GM12878 (cell line): ENCODE measurements at regions of chr16 and their contacts with region 1.

Region 1: GRCh38 chr16:69565671-69566239 is at the start of gene NFAT5:
- DNase-seq: no peak
- ATAC-seq: peak; percentile 40
- H3K4me3 ChIP-seq: peak within 1 kb of the TSS; percentile 97
- H3K27ac ChIP-seq: peak within 1 kb of the TSS; percentile 96
- H3K4me1 ChIP-seq: no peaks in the 10 kb centered on the region; the same call in 1 of the 2 replicates
- H3K27me3 ChIP-seq: no peaks in the 10 kb centered on the region
- CTCF ChIP-seq: no peak
- EP300 ChIP-seq: peak in 1 of 2 experiments; percentile 100; a peak in 2 of 4 replicates
- POLR2A ChIP-seq: peak; percentile 87
- RAD21 ChIP-seq: no peak
- polyA plus RNA-seq, gene NFAT5: 0.58 to 1.9 TPM

Region 2: DNA sequence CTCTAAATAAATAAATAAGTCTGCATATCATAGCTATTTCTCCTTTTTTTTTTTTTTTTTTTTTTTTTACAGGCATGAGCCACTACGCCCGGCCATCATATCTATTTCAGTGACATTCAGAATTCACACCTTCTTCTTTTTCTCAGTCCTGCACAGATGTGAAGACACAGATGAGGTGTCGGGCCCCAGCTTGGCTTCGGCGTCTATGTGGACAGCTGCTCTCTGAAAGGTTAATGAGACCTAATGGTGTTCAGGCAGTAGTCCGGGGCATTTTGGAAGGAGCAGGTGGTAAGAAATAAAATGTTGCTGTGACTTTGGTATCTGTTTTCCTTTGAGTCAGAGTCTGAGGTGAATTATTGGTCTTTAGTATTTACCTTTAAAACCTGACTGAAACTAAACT is 698.8 kb before region 1 on chr16:
- CTCF ChIA-PET with region 1: no interaction called
- POLR2A ChIA-PET with region 1: no interaction called
- RAD21 ChIA-PET with region 1: no interaction called
- SMC1A ChIA-PET with region 1: no interaction called
- in situ Hi-C with region 1: no loop called
- intact Hi-C with region 1: no loop called
- DNase-seq: no peak
- ATAC-seq: no peak
- H3K4me3 ChIP-seq: no peak overlapping the region
- H3K27ac ChIP-seq: no peak overlapping the region
- H3K4me1 ChIP-seq: peaks cover 12% of the 10 kb centered on the region; the same call in 1 of the 2 replicates
- H3K27me3 ChIP-seq: no peaks in the 10 kb centered on the region
- CTCF ChIP-seq: no peak
- EP300 ChIP-seq: no peak
- POLR2A ChIP-seq: no peak
- RAD21 ChIP-seq: no peak

Region 3: GRCh38 chr16:69157196-69157595 is 408.6 kb before region 1 on chr16:
- CTCF ChIA-PET with region 1: no interaction called
- POLR2A ChIA-PET with region 1: no interaction called
- RAD21 ChIA-PET with region 1: no interaction called
- SMC1A ChIA-PET with region 1: no interaction called
- in situ Hi-C with region 1: no loop called
- intact Hi-C with region 1: no loop called
- DNase-seq: no peak
- ATAC-seq: no peak
- H3K4me3 ChIP-seq: no peak overlapping the region
- H3K27ac ChIP-seq: no peak overlapping the region
- H3K4me1 ChIP-seq: no peaks in the 10 kb centered on the region
- H3K27me3 ChIP-seq: no peaks in the 10 kb centered on the region
- CTCF ChIP-seq: no peak
- EP300 ChIP-seq: no peak
- POLR2A ChIP-seq: no peak
- RAD21 ChIP-seq: no peak

Region 4: GRCh38 chr16:69410285-69410990 is 155.3 kb before region 1 on chr16:
- CTCF ChIA-PET with region 1: no interaction called
- POLR2A ChIA-PET with region 1: no interaction called
- RAD21 ChIA-PET with region 1: no interaction called
- SMC1A ChIA-PET with region 1: no interaction called
- in situ Hi-C with region 1: no loop called
- intact Hi-C with region 1: no loop called
- DNase-seq: no peak
- ATAC-seq: no peak
- H3K4me3 ChIP-seq: no peak overlapping the region
- H3K27ac ChIP-seq: no peak overlapping the region
- H3K4me1 ChIP-seq: no peaks in the 10 kb centered on the region
- H3K27me3 ChIP-seq: no peaks in the 10 kb centered on the region
- CTCF ChIP-seq: no peak
- EP300 ChIP-seq: no peak
- POLR2A ChIP-seq: no peak
- RAD21 ChIP-seq: no peak

Region 5: GRCh38 chr16:69424053-69424934 is 141.5 kb before region 1 on chr16 and contains the start of gene CYB5B:
- CTCF ChIA-PET with region 1: no interaction called
- POLR2A ChIA-PET with region 1: interaction called, 4 read pairs
- RAD21 ChIA-PET with region 1: interaction called, 4 read pairs
- SMC1A ChIA-PET with region 1: interaction called, 9 read pairs
- in situ Hi-C with region 1: no loop called
- intact Hi-C with region 1: loop called (anchors 2 kb)
- DNase-seq: peak; percentile 98
- ATAC-seq: peak; percentile 98
- H3K4me3 ChIP-seq: peak within 1 kb of the TSS; percentile 77
- H3K27ac ChIP-seq: peak within 1 kb of the TSS; percentile 78
- H3K4me1 ChIP-seq: no peaks in the 10 kb centered on the region
- H3K27me3 ChIP-seq: no peaks in the 10 kb centered on the region
- CTCF ChIP-seq: no peak
- EP300 ChIP-seq: no peak
- POLR2A ChIP-seq: peak; percentile 97
- RAD21 ChIP-seq: no peak
- polyA plus RNA-seq, gene CYB5B: 170 to 182 TPM

Region 6: DNA sequence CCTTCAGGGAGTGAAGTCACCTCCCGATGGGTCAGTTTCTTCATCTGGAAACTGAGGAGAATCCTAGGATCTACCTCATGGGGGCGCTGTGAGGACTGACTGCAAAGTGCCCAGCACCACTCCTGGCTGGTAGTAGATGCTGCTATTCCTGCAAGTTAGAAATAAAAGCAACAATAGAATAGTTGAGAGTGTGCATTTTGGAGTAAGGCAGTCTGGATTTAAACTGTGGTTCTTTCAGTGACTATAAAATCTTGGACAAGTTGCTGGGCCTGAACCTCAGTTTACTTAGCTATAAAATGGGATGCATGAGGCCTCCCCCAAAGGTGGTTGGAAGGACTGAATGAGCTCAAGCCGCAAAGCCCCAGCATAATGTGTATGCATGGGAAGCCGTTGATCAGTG is 70.8 kb before region 1 on chr16:
- CTCF ChIA-PET with region 1: interaction called, 17 read pairs
- POLR2A ChIA-PET with region 1: no interaction called
- RAD21 ChIA-PET with region 1: no interaction called
- SMC1A ChIA-PET with region 1: interaction called, 5 read pairs
- in situ Hi-C with region 1: no loop called
- intact Hi-C with region 1: no loop called
- DNase-seq: no peak
- ATAC-seq: peak; percentile 67
- H3K4me3 ChIP-seq: no peak overlapping the region
- H3K27ac ChIP-seq: no peak overlapping the region
- H3K4me1 ChIP-seq: no peaks in the 10 kb centered on the region
- H3K27me3 ChIP-seq: no peaks in the 10 kb centered on the region
- CTCF ChIP-seq: peak; percentile 27 to 52 (median 41)
- EP300 ChIP-seq: no peak
- POLR2A ChIP-seq: no peak
- RAD21 ChIP-seq: peak; percentile 36; the same call in 1 of the 2 replicates

Region 7: DNA sequence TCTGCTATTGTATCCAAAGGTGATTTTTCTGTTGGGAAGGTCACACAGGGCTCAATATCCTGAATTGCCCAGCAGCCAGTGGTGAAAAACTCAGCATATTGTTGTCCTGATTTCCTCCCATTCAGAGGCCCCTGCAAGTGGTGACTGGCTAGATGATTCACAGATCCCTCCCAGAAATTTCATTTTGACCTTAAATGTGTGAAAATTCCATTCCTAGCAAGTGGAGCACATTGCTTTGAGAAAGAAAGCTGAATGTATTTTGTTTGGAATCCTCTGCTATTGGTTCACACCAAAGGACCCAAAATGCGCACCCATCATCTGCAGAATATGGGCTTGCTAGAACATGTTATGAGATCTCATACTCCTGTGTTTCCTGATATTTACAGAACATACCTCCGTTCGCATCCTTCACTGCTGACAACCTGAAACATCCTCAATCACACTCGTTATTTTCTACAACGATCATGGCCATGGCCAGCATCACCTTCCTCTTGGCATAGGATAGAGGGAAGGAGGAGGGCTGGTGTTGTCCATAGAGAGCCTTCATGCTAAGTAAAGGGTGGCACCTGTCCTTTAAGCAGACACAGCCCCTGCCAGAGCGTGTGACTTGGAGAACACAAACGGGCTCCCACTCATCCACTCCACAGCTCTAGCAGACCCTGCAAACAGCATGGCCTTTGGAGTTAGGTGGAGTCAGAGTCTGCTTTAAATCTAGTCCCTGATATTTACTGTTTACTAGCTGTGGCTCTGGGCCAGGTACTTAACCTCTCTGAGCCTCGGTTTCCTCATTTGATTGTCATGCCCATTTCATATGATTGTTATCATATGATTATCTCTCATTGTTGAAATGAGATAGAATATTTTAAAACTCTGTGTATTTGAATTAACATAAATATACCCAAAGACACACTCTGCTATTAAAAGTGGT is 30.4 kb before region 1 on chr16:
- CTCF ChIA-PET with region 1: interaction called, 5 read pairs
- POLR2A ChIA-PET with region 1: interaction called, 9 read pairs
- RAD21 ChIA-PET with region 1: interaction called, 3 read pairs
- SMC1A ChIA-PET with region 1: interaction called, 4 read pairs
- in situ Hi-C with region 1: no loop called
- intact Hi-C with region 1: loop called (anchors 2 kb)
- DNase-seq: no peak
- ATAC-seq: no peak
- H3K4me3 ChIP-seq: no peak overlapping the region
- H3K27ac ChIP-seq: no peak overlapping the region
- H3K4me1 ChIP-seq: peaks cover 5% of the 10 kb centered on the region
- H3K27me3 ChIP-seq: no peaks in the 10 kb centered on the region
- CTCF ChIP-seq: no peak
- EP300 ChIP-seq: no peak
- POLR2A ChIP-seq: no peak
- RAD21 ChIP-seq: no peak

Region 8: GRCh38 chr16:69691980-69692911 is 126.5 kb after region 1 on chr16:
- CTCF ChIA-PET with region 1: no interaction called
- POLR2A ChIA-PET with region 1: no interaction called
- RAD21 ChIA-PET with region 1: no interaction called
- SMC1A ChIA-PET with region 1: no interaction called
- in situ Hi-C with region 1: no loop called
- intact Hi-C with region 1: no loop called
- DNase-seq: peak; percentile 7
- ATAC-seq: no peak; the same call in 1 of the 3 replicates
- H3K4me3 ChIP-seq: no peak overlapping the region
- H3K27ac ChIP-seq: no peak overlapping the region
- H3K4me1 ChIP-seq: peaks cover 5% of the 10 kb centered on the region; the same call in 1 of the 2 replicates
- H3K27me3 ChIP-seq: no peaks in the 10 kb centered on the region
- CTCF ChIP-seq: no peak
- EP300 ChIP-seq: no peak
- POLR2A ChIP-seq: no peak
- RAD21 ChIP-seq: no peak

Region 9: GRCh38 chr16:69754469-69755310 is 188.9 kb after region 1 on chr16 and contains the start of gene NOB1:
- CTCF ChIA-PET with region 1: interaction called, 6 read pairs
- POLR2A ChIA-PET with region 1: interaction called, 10 read pairs
- RAD21 ChIA-PET with region 1: interaction called, 15 read pairs
- SMC1A ChIA-PET with region 1: interaction called, 3 read pairs
- in situ Hi-C with region 1: no loop called
- intact Hi-C with region 1: no loop called
- DNase-seq: peak; percentile 92
- ATAC-seq: peak; percentile 97
- H3K4me3 ChIP-seq: peak within 1 kb of the TSS; percentile 93
- H3K27ac ChIP-seq: peak within 1 kb of the TSS; percentile 97
- H3K4me1 ChIP-seq: peaks cover 5% of the 10 kb centered on the region
- H3K27me3 ChIP-seq: no peaks in the 10 kb centered on the region
- CTCF ChIP-seq: peak; percentile 99 to 100 (median 99); a peak in 5 of 6 replicates
- EP300 ChIP-seq: no peak
- POLR2A ChIP-seq: peak; percentile 98
- RAD21 ChIP-seq: peak; percentile 72
- polyA plus RNA-seq, gene NOB1: 31.1 to 44.0 TPM